Endothelial cell of umbilical vein (primary cell): ENCODE measurements at regions of chr3 and their contacts with region 1.

Region 1: DNA sequence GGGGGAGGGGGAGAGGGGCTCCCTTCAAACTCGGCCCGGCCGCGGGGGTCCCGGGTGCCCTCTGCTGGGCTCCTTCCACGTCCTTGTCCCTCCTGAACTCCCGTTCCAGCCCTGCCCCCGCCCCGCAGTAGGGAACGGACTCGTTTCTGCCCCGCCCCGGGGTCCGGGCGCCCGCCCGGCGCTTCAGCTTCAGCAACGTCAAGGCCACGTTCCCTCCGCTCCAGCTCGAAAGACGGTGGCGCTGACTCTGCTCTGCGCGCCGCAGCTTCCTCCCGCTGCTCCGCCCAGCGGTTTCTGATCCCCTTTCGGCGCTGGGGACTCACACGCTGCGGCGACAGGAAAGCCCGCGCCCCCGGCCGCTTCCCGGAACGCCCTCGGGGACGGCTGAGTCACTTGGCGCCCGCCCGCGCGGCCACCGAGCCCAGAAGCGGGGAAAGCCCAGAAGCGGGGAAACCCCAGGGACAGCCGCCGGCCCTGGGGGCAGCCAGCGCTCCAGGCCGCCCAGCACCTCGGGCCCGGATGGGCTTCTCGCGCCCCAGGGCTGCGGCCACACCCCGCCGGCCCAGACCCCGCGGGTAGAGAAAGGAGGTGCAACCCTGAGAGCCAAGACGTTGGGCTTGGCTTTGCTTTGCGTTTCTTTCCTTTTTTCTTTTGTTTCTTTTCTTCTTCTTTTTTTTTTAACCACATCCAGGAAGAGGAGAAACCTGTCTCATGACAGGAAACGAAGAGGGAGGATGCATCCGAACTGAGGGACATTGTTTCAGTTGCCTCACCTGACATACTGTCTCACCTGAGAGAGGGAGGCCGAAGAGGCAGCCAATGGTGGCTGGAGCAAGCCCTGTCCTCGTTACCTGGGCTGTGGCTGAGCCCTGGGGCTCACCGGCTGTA is 28.9 kb downstream of the ARHGAP31 start:
- DNase-seq: peak; percentile 90
- H3K4me3 ChIP-seq: peak overlapping the region; percentile 27 to 69 (median 44)
- H3K27ac ChIP-seq: peak overlapping the region; percentile 61
- H3K4me1 ChIP-seq: peaks cover 22% of the 10 kb centered on the region
- H3K27me3 ChIP-seq: no peaks in the 10 kb centered on the region
- CTCF ChIP-seq: peak in 1 of 2 donors; percentile 11
- POLR2A ChIP-seq: peak; percentile 57

Region 2: GRCh38 chr3:119293871-119294695 is 29.0 kb before region 1 on chr3 and contains the start of gene ARHGAP31:
- CTCF ChIA-PET with region 1: interaction called, 11 read pairs
- POLR2A ChIA-PET with region 1: interaction called, 3 read pairs
- dilution Hi-C with region 1: no loop called
- intact Hi-C with region 1: loop called (anchors 1 kb)
- DNase-seq: peak; percentile 90
- H3K4me3 ChIP-seq: peak within 1 kb of the TSS; percentile 84 to 92 (median 86)
- H3K27ac ChIP-seq: peak within 1 kb of the TSS; percentile 78
- H3K4me1 ChIP-seq: peaks cover 32% of the 10 kb centered on the region
- H3K27me3 ChIP-seq: no peaks in the 10 kb centered on the region
- CTCF ChIP-seq: no peak
- POLR2A ChIP-seq: peak; percentile 77
- total RNA-seq, gene ARHGAP31: 64.8 and 65.8 TPM in 2 replicates

Region 3: GRCh38 chr3:119368298-119368697 is 45.2 kb after region 1 on chr3:
- CTCF ChIA-PET with region 1: no interaction called
- POLR2A ChIA-PET with region 1: no interaction called
- dilution Hi-C with region 1: no loop called
- intact Hi-C with region 1: no loop called
- DNase-seq: no peak
- H3K4me3 ChIP-seq: no peak overlapping the region
- H3K27ac ChIP-seq: no peak overlapping the region
- H3K4me1 ChIP-seq: no peaks in the 10 kb centered on the region
- H3K27me3 ChIP-seq: no peaks in the 10 kb centered on the region
- CTCF ChIP-seq: no peak
- POLR2A ChIP-seq: no peak